Naive thymus-derived CD4-positive, alpha-beta T cell (primary cell): ENCODE measurements at regions of chr9 and their contacts with region 1.

Region 1: GRCh38 chr9:37079370-37080164 is 40.8 kb upstream of the ZCCHC7 start:
- DNase-seq: peak; percentile 72 to 96 (median 94)
- ATAC-seq: peak; percentile 98
- H3K4me3 ChIP-seq: peak overlapping the region; percentile 67
- H3K4me3 Mint-ChIP-seq: peak overlapping the region; percentile 89 to 98 (median 95)
- H3K27ac ChIP-seq: peak overlapping the region; percentile 99
- H3K27ac Mint-ChIP-seq: peak overlapping the region; percentile 76 to 99 (median 97)
- H3K4me1 ChIP-seq: peaks cover 14 to 15% of the 10 kb centered on the region in 2 donors
- H3K4me1 Mint-ChIP-seq: peaks cover 33 to 56% (median 41%) of the 10 kb centered on the region in 7 donors
- H3K27me3 ChIP-seq: no peaks in the 10 kb centered on the region
- H3K27me3 Mint-ChIP-seq: peaks cover 0 to 10% (median 3%) of the 10 kb centered on the region in 5 donors

Region 2: GRCh38 chr9:37036776-37037502 is 42.6 kb before region 1 on chr9:
- CTCF ChIA-PET with region 1: no interaction called
- POLR2A ChIA-PET with region 1: interaction called, 3 read pairs
- intact Hi-C with region 1: loop called (anchors 2 to 5 kb)
- DNase-seq: peak in 8 of 9 donors; percentile 31 to 55 (median 47)
- ATAC-seq: peak; percentile 74
- H3K4me3 ChIP-seq: peak overlapping the region; percentile 49
- H3K4me3 Mint-ChIP-seq: peak overlapping the region; percentile 76 to 98 (median 88)
- H3K27ac ChIP-seq: no peak overlapping the region
- H3K27ac Mint-ChIP-seq: peak overlapping the region in 5 of 9 donors; percentile 6 to 75 (median 30)
- H3K4me1 ChIP-seq: peaks cover 16 to 34% of the 10 kb centered on the region in 2 donors
- H3K4me1 Mint-ChIP-seq: peaks cover 21 to 50% (median 36%) of the 10 kb centered on the region in 7 donors
- H3K27me3 ChIP-seq: peaks cover 25 to 62% of the 10 kb centered on the region in 2 donors
- H3K27me3 Mint-ChIP-seq: peaks cover 78 to 94% (median 84%) of the 10 kb centered on the region in 5 donors

Region 3: DNA sequence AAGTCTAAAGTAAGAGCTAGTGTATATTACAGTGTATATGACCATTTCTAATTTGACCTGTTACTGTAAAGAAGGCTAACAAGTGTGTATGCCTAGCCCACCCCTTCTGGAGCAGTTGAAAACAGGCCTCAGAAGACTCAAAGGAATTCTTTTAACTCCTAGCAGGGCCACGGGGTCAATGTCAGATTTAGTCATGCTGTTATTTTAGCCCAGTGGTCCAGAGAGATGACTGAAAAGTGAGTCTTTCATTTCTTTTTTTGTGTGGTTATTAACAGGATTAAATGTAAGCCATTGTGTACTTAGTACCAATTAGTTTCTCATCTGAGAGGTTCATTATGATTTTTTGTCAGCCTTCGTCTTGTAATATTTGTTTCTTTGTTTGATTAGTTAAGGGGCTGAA is 65.2 kb after region 1 on chr9:
- CTCF ChIA-PET with region 1: no interaction called
- POLR2A ChIA-PET with region 1: interaction called, 6 read pairs
- intact Hi-C with region 1: loop called (anchors 1 to 2 kb)
- DNase-seq: no peak
- ATAC-seq: no peak
- H3K4me3 ChIP-seq: no peak overlapping the region
- H3K4me3 Mint-ChIP-seq: peak overlapping the region in 9 of 10 donors; percentile 8 to 77 (median 50)
- H3K27ac ChIP-seq: no peak overlapping the region
- H3K27ac Mint-ChIP-seq: peak overlapping the region in 8 of 9 donors; percentile 23 to 91 (median 83)
- H3K4me1 ChIP-seq: peaks cover 19 to 47% of the 10 kb centered on the region in 2 donors
- H3K4me1 Mint-ChIP-seq: peaks cover 21 to 89% (median 71%) of the 10 kb centered on the region in 7 donors
- H3K27me3 ChIP-seq: no peaks in the 10 kb centered on the region
- H3K27me3 Mint-ChIP-seq: no peaks in the 10 kb centered on the region

Region 4: DNA sequence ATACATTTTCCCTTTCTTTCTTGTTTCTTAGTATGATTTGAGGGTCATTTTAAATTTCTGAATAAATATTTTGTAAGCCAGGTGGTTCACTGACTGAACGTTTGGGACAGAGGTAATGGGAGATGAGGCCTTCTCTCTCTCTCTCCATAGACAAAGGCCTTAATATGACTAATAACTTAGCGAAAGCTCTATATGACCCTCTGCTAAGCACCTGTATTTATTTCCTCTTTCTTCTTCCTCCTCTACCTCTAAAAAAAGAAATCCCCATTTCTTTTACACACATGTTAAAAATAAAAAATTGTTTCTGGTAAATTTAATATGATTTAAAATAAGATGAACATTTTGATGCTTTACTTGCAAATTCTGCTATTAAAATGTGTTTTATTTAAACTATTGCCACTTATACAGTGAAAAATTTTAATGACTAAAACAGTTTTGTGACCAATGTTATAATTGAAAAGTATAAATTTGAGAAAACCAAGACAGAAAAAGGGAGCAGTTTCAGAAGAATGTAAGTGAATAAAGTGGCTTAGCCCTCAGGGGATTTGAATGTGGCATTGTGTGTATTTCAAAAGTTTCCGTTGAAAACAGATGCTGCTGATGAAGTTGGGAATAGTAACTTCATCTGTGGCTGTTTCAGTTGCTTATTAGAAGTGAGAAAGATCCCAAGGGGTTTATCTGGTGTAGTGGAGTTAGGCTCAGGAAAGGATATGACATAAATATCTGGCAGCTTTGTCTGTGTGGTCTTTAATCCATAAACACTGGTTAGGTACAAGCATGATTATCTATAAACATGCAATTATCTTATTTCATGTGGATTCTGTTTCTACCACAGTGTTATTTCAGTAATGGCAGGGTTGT is 214.3 kb after region 1 on chr9:
- CTCF ChIA-PET with region 1: no interaction called
- POLR2A ChIA-PET with region 1: interaction called, 3 read pairs
- intact Hi-C with region 1: loop called in 1 of 2 experiments (anchors 5 kb)
- DNase-seq: no peak
- ATAC-seq: no peak
- H3K4me3 ChIP-seq: no peak overlapping the region
- H3K4me3 Mint-ChIP-seq: peak overlapping the region in 1 of 10 donors; percentile 10
- H3K27ac ChIP-seq: no peak overlapping the region
- H3K27ac Mint-ChIP-seq: no peak overlapping the region
- H3K4me1 ChIP-seq: peaks cover 0 to 2% of the 10 kb centered on the region in 2 donors
- H3K4me1 Mint-ChIP-seq: peaks cover 24 to 83% (median 70%) of the 10 kb centered on the region in 7 donors
- H3K27me3 ChIP-seq: no peaks in the 10 kb centered on the region
- H3K27me3 Mint-ChIP-seq: no peaks in the 10 kb centered on the region

Region 5: GRCh38 chr9:37422289-37423104 is 342.9 kb after region 1 on chr9 and contains the start of gene GRHPR:
- CTCF ChIA-PET with region 1: no interaction called
- POLR2A ChIA-PET with region 1: interaction called, 3 read pairs
- intact Hi-C with region 1: loop called in 1 of 2 experiments (anchors 2 kb)
- DNase-seq: peak; percentile 76 to 93 (median 84)
- ATAC-seq: peak; percentile 99
- H3K4me3 ChIP-seq: peak within 1 kb of the TSS; percentile 86
- H3K4me3 Mint-ChIP-seq: peak within 1 kb of the TSS; percentile 84 to 98 (median 96)
- H3K27ac ChIP-seq: peak within 1 kb of the TSS; percentile 89
- H3K27ac Mint-ChIP-seq: peak within 1 kb of the TSS; percentile 87 to 98 (median 95)
- H3K4me1 ChIP-seq: peaks cover 5 to 12% of the 10 kb centered on the region in 2 donors
- H3K4me1 Mint-ChIP-seq: peaks cover 19 to 31% (median 23%) of the 10 kb centered on the region in 7 donors
- H3K27me3 ChIP-seq: no peaks in the 10 kb centered on the region
- H3K27me3 Mint-ChIP-seq: no peaks in the 10 kb centered on the region
- total RNA-seq, gene GRHPR: 33.2 to 58.6 (median 53.1) TPM